ENCODE measurements at regions of chr20 and their contacts with region 1.

Region 1: DNA sequence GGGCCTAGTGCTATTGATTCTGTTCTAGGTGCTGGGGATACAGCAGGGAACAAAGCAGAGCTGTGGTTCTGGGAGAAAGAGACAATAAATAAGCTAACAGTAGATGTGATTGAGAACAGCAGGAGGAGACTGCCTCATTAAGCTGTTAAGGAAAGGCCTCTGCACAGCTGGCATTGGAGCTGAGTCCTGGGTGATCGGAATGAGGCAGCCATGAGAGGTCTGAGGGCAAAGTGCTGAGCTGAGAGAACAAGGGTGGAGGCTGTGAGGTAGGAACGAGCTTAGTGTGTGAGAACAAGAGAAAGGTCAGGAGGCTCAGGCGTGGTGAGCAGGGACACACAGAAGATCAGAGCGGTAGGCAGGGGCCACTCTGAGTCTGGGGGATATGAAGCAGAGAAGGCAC is 18.3 kb downstream of the DDX27 start:
- DNase-seq: no peak
- ATAC-seq: no peak
- H3K4me3 ChIP-seq: no peak overlapping the region
- H3K27ac ChIP-seq: no peak overlapping the region
- H3K4me1 ChIP-seq: no peaks in the 10 kb centered on the region
- H3K27me3 ChIP-seq: no peaks in the 10 kb centered on the region
- CTCF ChIP-seq: no peak

Region 2: DNA sequence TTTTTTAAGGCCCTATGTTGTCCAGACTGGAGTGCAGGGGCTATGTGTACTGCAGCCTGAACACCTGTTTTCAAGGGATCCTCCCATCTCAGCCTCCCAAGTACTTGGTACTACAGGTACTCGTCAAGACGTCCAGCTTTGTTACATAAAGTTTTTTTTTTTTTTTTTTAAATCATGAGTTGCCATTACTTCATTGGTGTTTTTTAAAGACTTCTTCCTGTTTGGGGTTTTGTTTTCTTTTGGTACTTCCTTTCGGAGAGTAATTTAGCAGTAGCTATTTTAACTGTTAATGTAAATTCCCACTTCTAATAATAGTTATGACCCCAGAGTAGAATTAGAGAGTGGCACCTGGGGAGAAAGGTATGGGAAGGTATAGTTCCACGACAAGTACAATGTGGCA is 29.8 kb after region 1 on chr20:
- CTCF ChIA-PET with region 1: no interaction called
- POLR2A ChIA-PET with region 1: interaction called, 12 read pairs
- in situ Hi-C with region 1: no loop called
- intact Hi-C with region 1: no loop called
- DNase-seq: no peak
- ATAC-seq: no peak
- H3K4me3 ChIP-seq: no peak overlapping the region
- H3K27ac ChIP-seq: no peak overlapping the region
- H3K4me1 ChIP-seq: no peaks in the 10 kb centered on the region; the same call in 1 of the 2 replicates
- H3K27me3 ChIP-seq: no peaks in the 10 kb centered on the region
- CTCF ChIP-seq: no peak

Region 3: DNA sequence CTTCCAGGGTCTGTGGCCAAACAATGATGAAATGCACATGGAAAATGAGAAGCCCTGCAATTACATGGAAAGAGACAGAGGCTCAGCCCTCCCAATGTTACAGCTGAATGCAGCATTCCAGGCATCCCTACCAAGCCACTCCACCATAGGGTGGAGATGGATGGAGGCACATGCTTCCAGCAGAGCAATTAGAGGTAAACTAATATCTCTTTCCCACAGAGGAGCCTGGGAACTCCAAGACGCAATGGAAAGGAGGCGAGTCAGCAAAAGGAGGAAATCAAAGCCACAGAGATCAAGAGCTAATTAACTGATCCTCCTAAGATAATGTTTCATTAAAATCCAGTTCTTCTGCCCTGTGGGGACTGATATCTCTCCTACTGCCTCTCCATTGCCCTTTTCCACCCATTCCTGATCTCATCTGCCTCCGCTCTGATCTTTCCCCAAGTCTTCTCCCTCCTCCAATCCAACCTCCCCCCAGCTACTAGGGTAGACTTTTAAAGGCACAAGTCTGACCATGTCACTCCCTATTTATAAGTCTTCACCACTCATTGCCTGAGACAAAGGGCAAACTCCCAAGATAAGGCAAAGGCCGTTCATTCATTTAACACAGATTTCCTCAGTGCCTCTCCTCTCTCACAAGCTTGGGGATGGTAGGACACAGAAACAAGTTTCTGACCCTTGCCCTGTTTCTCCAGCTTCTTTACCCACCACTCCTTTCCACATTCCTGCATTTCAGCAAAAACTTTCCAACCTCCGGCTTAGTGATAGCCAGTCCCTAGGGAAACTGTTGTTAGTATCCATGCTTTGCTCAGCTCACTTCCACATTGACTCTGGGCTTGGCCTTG is 259.2 kb after region 1 on chr20:
- CTCF ChIA-PET with region 1: no interaction called
- POLR2A ChIA-PET with region 1: no interaction called
- in situ Hi-C with region 1: no loop called
- intact Hi-C with region 1: no loop called
- DNase-seq: no peak
- ATAC-seq: no peak
- H3K4me3 ChIP-seq: no peak overlapping the region
- H3K27ac ChIP-seq: no peak overlapping the region
- H3K4me1 ChIP-seq: no peaks in the 10 kb centered on the region
- H3K27me3 ChIP-seq: no peaks in the 10 kb centered on the region
- CTCF ChIP-seq: no peak

Measured in Panc1 (cell line).